WTC11 (cell line): ENCODE measurements at regions of chr7 and their contacts with region 1.

Region 1: DNA sequence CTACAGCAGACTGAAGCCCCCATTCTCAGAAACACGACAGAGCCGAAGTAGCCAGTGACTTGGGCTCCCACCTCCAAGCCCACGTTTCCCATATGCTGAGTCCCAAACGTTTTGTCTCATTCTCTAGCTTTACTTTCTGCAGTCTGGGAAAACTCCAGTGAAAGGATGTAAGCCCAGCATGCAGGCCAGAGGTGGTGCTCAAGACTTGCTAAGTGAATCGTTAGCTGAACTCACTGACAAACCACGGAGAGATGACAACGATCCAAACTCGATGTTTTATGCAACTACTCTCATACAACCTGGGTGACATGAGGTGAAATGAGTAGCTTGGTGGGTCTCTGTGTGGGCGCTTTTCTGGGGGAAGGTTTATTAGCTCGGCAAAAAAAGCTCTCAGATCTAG is 731.8 kb downstream of the SUGCT start:
- DNase-seq: no peak
- ATAC-seq: peak; percentile 51
- H3K4me3 Mint-ChIP-seq: no peak overlapping the region
- H3K27ac Mint-ChIP-seq: no peak overlapping the region
- H3K4me1 Mint-ChIP-seq: peaks cover 16% of the 10 kb centered on the region
- H3K27me3 Mint-ChIP-seq: no peaks in the 10 kb centered on the region
- CTCF ChIP-seq: no peak

Region 2: DNA sequence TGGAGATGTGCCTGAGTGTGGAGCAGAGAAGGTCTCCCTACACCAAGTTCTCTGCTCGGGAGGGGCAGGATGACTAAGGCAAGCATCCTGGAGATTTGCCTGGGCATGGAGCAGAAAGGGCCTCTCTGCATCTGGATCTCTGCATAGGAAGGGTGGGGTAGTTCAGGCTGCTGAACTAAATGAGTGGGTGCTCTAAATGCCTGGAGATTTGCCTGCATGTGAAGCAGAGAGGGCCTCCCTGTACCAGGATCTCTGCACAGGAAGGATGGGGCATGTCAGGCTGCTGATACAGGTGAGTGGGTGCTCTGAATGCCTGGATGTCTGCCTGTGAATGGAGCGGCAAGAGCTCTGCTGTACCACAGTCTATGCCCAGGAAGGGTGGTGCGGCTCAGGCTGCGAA is 51.1 kb before region 1 on chr7:
- CTCF ChIA-PET with region 1: no interaction called
- POLR2A ChIA-PET with region 1: no interaction called
- DNase-seq: no peak
- ATAC-seq: no peak
- H3K4me3 Mint-ChIP-seq: no peak overlapping the region
- H3K27ac Mint-ChIP-seq: no peak overlapping the region
- H3K4me1 Mint-ChIP-seq: no peaks in the 10 kb centered on the region
- H3K27me3 Mint-ChIP-seq: peaks cover 2% of the 10 kb centered on the region; the same call in 1 of the 2 replicates
- CTCF ChIP-seq: no peak

Region 3: DNA sequence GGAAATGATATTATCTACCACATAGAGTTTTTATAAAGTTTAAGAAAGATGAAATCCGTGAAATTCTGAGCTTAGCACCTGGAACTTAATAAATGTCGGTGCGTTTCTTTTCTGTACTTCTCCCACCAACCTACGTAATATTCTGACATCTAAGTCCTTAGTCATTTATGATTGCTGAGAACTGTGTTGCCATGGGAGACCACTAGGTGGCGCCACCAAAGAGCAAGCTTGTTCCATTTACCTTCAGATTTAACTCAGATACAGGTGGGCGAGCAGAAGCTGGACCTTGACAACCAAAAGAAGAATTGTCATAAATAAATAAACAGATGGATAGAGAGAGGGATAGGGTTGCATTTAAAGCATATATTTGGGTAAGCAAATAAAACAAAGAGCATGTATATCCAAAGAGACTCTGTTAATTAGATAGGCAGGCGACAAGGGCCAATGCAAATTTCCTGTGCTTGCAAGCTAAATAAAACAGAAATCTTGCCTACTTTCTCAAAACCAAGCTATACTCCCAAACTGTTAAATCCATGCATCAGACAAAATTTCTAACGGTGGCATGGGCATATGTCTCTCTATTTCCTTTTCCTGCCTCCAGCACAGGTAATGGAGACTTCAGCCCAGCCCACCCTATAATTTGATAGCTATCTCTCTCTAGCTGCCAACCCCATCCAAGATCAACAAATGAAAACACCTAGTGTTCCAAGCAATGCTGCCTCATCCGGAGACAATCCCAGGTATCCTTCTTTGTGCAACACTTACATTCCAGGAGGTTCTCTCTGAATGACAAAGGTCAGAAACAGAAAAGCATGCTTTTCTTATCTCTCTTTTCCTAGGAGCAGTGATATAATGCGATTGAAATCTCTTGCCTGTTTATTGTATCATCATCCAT is 136.7 kb after region 1 on chr7:
- CTCF ChIA-PET with region 1: interaction called, 10 read pairs
- POLR2A ChIA-PET with region 1: no interaction called
- DNase-seq: peak; percentile 83
- ATAC-seq: peak; percentile 62
- H3K4me3 Mint-ChIP-seq: no peak overlapping the region
- H3K27ac Mint-ChIP-seq: no peak overlapping the region
- H3K4me1 Mint-ChIP-seq: peaks cover 11% of the 10 kb centered on the region; the same call in 1 of the 2 replicates
- H3K27me3 Mint-ChIP-seq: no peaks in the 10 kb centered on the region; the same call in 1 of the 2 replicates
- CTCF ChIP-seq: peak; percentile 85